Colonic mucosa (tissue), 4 donors: ENCODE measurements at regions of chr11 and their contacts with region 1.

Region 1: DNA sequence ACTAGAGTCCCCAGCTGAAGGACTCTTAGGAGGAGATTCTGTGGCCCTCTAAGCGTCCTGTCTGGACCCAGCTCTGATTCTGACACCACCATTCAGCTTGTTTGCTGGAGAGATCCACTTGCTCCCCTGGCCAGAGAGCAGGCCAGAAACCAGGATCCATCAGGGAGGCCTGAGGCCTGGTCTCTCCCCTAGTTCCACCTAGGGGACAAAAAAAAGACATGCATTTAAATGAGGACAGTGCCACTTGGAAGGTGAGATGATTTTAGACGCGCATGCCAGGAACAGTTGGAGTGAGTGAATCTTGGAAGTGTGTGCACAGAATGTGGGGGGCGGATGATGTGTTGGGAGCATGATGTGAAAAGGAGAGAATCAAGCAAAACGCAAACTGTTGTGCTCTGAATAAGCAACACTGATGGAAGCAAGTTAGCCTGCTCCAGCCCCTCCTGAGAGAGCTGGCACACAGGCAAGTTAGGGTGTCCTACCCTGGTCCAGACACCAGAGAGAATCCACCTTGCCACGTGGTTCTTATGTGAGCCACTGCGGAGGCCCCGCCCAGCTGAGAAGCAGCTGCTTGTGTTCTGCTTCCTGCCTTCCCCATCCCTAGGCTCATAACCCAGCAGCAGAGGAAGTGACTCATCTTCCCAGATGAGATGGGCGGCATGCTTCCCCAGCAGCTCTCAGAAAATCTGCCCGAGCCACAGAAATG is 8.0 kb upstream of the SLCO2B1 start:
- DNase-seq: peak; percentile 76
- H3K4me3 ChIP-seq: no peak overlapping the region
- H3K27ac ChIP-seq: peak overlapping the region; percentile 46
- H3K4me1 ChIP-seq: peaks cover 6% of the 10 kb centered on the region
- H3K27me3 ChIP-seq: no peaks in the 10 kb centered on the region
- CTCF ChIP-seq: no peak

Region 2: DNA sequence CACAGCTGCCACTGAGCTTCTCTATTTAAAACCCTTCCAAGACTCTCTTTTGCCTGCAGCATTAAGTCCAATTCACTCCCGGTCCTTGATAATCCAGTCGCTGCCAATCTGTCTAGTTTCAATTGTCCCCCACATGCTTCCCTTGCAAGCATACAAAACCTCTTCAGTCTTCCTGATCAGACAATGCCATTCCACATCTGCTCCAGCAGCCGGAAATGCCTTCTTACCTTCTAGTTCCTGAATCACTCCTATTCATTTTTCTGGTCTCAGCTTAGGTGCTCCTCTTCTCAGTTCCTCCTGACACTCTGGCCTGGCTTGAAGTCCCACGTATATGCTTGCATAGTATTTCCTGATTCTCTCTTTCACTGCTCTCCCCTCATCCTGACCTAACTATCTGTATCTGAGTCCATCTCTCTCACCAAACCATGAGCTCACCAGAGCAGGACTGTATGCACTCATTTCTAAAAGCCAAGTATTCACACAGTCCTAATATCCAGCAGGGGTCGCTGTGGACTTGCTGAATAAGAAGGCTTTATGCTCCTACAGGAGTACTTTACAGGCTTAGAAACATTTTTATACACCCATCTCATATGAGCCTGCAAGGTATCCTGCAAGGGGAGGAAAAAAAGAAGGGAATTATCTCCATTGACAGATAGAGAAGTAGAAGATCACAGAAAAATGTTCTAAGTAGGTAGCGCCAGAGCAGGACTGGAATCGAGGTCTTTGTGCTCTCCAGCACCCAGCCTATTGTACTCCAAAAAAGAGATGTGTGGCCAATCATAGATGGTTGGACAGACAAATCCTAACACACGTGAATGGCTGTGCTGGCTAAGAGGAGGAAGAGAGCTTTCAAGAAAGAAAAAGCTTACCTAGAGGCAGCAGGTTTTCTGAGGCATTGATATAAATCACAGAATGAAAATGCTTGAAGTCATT is 213.2 kb before region 1 on chr11:
- intact Hi-C with region 1: loop called (anchors 5 kb)
- DNase-seq: peak; percentile 78
- H3K4me3 ChIP-seq: no peak overlapping the region
- H3K27ac ChIP-seq: no peak overlapping the region
- H3K4me1 ChIP-seq: no peaks in the 10 kb centered on the region
- H3K27me3 ChIP-seq: no peaks in the 10 kb centered on the region
- CTCF ChIP-seq: peak; percentile 79

Region 3: DNA sequence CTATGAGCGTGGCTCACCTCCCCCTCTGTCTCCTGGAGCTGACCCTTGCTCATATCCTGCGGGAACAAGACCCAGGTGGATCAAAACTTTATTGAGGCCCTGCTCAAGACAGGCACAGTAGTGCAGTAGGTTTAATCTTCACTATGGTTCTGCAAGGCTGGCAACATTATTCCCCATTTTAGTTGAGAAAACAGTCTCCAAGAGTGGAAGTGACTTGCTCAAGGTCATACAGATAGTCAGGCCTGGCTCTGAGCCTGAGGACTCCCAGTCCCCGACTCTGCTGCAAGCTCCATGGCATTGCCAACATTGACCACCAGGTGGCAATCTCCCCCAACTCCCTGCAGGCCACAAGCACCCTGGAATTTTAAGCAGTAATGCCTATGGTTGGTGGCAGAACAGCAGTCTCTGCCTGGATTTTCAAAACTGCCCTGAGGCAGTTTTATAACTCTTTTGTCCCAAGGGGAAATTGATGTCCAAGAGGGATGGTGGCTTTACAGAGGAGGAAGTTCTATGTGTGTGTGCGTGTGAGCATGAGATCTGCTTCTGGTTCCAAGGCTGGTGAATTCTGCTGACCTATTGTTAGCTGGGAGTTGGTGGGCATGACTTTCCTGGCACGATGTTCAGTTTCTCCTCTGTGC is 120.0 kb before region 1 on chr11:
- intact Hi-C with region 1: loop called (anchors 5 kb)
- DNase-seq: peak; percentile 82
- H3K4me3 ChIP-seq: no peak overlapping the region
- H3K27ac ChIP-seq: no peak overlapping the region
- H3K4me1 ChIP-seq: no peaks in the 10 kb centered on the region
- H3K27me3 ChIP-seq: no peaks in the 10 kb centered on the region
- CTCF ChIP-seq: peak; percentile 100

Region 4: DNA sequence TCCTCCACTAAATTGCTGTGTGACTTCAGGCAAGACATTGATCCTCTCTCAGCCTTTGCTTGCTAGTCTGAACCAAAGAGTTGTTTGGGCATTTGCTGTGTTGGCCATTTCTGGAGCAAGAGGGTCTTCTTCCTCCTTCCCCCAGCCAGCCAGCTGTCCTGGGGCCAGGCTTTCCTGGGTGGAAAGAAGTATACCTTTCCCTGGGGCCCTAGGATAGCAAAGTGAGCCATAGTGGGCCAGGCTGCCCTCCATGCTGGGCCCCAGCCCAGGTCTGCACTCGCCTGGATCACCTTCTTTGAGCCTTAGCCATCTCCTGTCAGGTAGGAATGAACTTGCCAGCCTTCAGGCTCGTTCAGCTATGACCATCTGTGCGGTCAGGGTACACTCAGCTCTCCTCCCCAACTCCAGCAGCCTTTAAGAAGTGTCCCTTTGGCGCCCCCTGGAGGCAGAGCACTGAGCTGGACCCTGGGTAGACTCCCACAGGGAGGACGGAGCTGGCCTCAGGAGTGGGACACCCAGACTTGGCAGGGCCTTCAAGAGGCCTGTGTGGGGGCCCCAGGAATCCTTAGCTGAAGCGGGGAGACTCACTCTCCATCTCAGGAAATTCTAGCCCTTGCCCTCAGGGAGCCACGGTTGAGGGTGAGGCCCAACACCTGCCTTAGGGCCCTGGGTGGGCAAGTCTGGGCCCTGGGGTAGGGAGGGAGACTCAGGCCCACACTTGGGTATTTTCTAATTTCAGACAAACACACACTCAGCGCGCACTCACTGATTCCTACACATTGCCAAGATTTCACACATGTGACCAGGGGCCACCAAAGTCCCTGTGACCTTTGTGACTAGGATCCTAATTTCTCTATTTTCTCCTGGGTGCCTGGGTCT is 62.1 kb after region 1 on chr11:
- intact Hi-C with region 1: loop called (anchors 1 kb)
- DNase-seq: peak; percentile 93
- H3K4me3 ChIP-seq: no peak overlapping the region
- H3K27ac ChIP-seq: no peak overlapping the region
- H3K4me1 ChIP-seq: no peaks in the 10 kb centered on the region
- H3K27me3 ChIP-seq: no peaks in the 10 kb centered on the region
- CTCF ChIP-seq: peak; percentile 92

Region 5: GRCh38 chr11:75241036-75241905 is 98.4 kb after region 1 on chr11:
- intact Hi-C with region 1: loop called (anchors 2 kb)
- DNase-seq: peak; percentile 86
- H3K4me3 ChIP-seq: peak overlapping the region; percentile 34
- H3K27ac ChIP-seq: no peak overlapping the region
- H3K4me1 ChIP-seq: peaks cover 6% of the 10 kb centered on the region
- H3K27me3 ChIP-seq: peaks cover 28% of the 10 kb centered on the region
- CTCF ChIP-seq: peak; percentile 58